ENCODE measurements at regions of chr2 and their contacts with region 1.

Region 1: GRCh38 chr2:43803113-43803512 is 29.3 kb downstream of the DYNC2LI1 start:
- DNase-seq: no peak
- ATAC-seq: no peak
- H3K4me3 ChIP-seq: no peak overlapping the region
- H3K27ac ChIP-seq: no peak overlapping the region
- H3K4me1 ChIP-seq: peaks cover 66% of the 10 kb centered on the region
- H3K27me3 ChIP-seq: no peaks in the 10 kb centered on the region
- CTCF ChIP-seq: no peak
- EP300 ChIP-seq: no peak
- POLR2A ChIP-seq: no peak
- RAD21 ChIP-seq: no peak

Region 2: DNA sequence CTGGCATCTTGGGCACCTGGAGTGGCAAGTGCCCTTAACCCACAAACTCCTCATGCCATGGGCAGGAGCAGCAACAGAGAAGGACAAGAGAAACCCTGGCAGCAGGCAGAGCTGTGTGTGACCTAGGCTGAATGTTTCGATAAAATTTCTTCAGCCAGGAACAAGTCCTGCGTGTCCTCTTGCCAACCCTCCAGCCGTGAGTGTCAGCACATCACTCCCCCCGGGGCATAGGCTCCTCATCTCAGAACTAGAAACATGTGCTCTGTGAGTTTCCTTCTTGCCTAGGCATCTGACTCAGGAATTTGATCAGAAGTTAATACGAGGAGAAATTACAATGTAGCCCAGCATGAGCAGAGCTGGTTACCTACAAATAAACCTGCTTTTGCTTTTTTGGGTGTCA is 37.9 kb after region 1 on chr2:
- CTCF ChIA-PET with region 1: interaction called, 3 read pairs
- POLR2A ChIA-PET with region 1: interaction called, 17 read pairs
- in situ Hi-C with region 1: no loop called
- intact Hi-C with region 1: loop called (anchors 2 kb)
- DNase-seq: no peak
- ATAC-seq: no peak
- H3K4me3 ChIP-seq: no peak overlapping the region
- H3K27ac ChIP-seq: no peak overlapping the region
- H3K4me1 ChIP-seq: peaks cover 67% of the 10 kb centered on the region
- H3K27me3 ChIP-seq: no peaks in the 10 kb centered on the region
- CTCF ChIP-seq: no peak
- EP300 ChIP-seq: no peak
- POLR2A ChIP-seq: no peak
- RAD21 ChIP-seq: no peak

Region 3: GRCh38 chr2:43884651-43885050 is 81.5 kb after region 1 on chr2:
- CTCF ChIA-PET with region 1: no interaction called
- POLR2A ChIA-PET with region 1: interaction called, 4 read pairs
- in situ Hi-C with region 1: no loop called
- intact Hi-C with region 1: loop called (anchors 5 kb)
- DNase-seq: peak; percentile 69
- ATAC-seq: no peak; the same call in 2 of the 3 replicates
- H3K4me3 ChIP-seq: no peak overlapping the region
- H3K27ac ChIP-seq: peak overlapping the region; percentile 18
- H3K4me1 ChIP-seq: peaks cover 54% of the 10 kb centered on the region
- H3K27me3 ChIP-seq: no peaks in the 10 kb centered on the region
- CTCF ChIP-seq: no peak
- EP300 ChIP-seq: no peak; a peak in 1 of 4 replicates
- POLR2A ChIP-seq: no peak
- RAD21 ChIP-seq: no peak

Measured in HepG2 (cell line).